ENCODE measurements at regions of chr1 and their contacts with region 1.

Region 1: DNA sequence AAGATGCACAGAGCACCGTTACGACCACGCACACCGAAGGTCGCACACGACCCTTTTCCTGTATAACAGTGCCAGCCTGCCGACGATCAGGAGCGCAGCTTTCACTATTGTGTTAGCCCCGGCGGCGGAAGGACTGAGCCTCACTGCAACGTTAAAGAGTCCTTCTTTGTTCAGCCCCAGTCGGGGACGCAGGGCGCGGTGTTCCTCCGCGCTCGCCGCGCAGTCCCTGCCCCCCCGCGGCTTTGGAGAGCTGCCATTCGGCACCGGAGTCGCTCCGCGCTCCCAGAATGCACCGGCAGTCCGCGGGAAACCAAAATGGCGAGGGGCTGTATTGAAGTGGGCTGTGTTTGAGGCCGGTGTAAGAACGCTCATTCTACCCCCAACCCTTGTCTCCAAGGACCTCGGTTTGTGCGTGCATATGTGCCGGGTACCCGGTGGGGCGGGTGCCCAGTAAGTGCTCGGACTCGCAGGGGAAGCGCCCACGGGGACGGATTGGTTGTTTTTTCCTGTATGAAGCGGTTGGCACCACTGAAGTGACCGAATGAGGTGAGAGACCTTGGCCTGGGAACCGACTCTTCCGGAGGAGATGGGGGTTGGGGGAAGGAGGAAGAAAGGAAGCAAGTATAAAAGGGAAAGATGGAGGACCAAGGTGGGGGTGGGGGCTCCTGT is at the start of gene MTF2:
- DNase-seq: peak; percentile 93
- H3K4me3 Mint-ChIP-seq: peak within 1 kb of the TSS; percentile 99
- H3K27ac Mint-ChIP-seq: peak within 1 kb of the TSS; percentile 95
- H3K4me1 Mint-ChIP-seq: peaks cover 12% of the 10 kb centered on the region
- H3K27me3 Mint-ChIP-seq: no peaks in the 10 kb centered on the region
- CTCF ChIP-seq: no peak
- total RNA-seq, gene MTF2: 17.0 and 20.0 TPM in 2 replicates

Region 2: GRCh38 chr1:92538048-92538412 is 541.1 kb before region 1 on chr1:
- CTCF ChIA-PET with region 1: no interaction called
- POLR2A ChIA-PET with region 1: no interaction called
- intact Hi-C with region 1: no loop called
- DNase-seq: no peak
- H3K4me3 Mint-ChIP-seq: no peak overlapping the region
- H3K27ac Mint-ChIP-seq: no peak overlapping the region
- H3K4me1 Mint-ChIP-seq: no peaks in the 10 kb centered on the region
- H3K27me3 Mint-ChIP-seq: no peaks in the 10 kb centered on the region
- CTCF ChIP-seq: no peak

Region 3: GRCh38 chr1:93061895-93062792 is 17.0 kb before region 1 on chr1:
- CTCF ChIA-PET with region 1: interaction called, 6 read pairs
- POLR2A ChIA-PET with region 1: interaction called, 21 read pairs
- intact Hi-C with region 1: no loop called
- DNase-seq: peak; percentile 62
- H3K4me3 Mint-ChIP-seq: no peak overlapping the region
- H3K27ac Mint-ChIP-seq: no peak overlapping the region
- H3K4me1 Mint-ChIP-seq: no peaks in the 10 kb centered on the region
- H3K27me3 Mint-ChIP-seq: peaks cover 65% of the 10 kb centered on the region
- CTCF ChIP-seq: peak; percentile 29

Region 4: DNA sequence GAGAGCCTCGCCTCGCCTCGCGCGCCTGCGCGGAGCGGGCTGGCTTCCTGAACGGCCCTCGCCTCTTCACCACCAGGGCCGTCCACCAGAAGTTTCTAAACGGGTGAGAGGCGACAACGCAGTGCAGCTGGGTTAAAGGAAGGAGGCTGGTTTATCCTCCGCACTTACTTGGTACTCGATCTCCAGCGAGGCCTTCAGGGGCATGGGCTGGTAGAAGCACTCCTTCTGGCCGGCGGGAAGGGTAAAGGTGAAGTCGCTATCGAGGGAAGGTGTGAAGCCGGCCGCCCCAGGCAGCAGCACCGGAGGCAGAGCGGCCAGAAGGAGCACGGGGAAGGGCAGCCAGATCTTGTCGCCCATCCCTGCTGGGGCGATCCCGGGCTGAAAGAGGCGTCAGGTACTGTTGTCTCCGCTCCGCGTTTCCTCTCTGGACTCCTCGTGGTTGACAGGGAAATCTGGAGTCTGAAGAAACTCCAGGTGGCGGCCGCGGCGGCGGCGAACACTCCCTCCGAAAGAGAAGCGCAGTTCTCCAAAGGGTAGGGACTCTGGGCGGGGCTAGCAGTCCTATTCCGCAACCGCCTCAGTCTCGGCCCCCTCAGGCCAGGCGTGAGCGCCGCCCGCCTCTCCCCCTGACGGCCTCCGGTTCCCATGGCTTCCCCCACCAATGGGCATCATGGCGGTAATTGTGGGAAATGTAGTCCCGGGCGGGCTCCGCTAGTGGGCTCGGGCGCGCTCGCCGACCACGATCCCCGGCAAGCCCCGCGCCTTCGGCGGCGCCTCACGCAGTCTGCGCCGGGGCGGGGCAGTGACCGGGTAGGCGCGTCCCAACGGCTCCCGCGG is 101.0 kb after region 1 on chr1 and contains the start of gene TMED5:
- CTCF ChIA-PET with region 1: no interaction called
- POLR2A ChIA-PET with region 1: interaction called, 27 read pairs
- intact Hi-C with region 1: loop called (anchors 1 kb)
- DNase-seq: peak; percentile 99
- H3K4me3 Mint-ChIP-seq: peak within 1 kb of the TSS; percentile 93
- H3K27ac Mint-ChIP-seq: peak within 1 kb of the TSS; percentile 100
- H3K4me1 Mint-ChIP-seq: peaks cover 34% of the 10 kb centered on the region
- H3K27me3 Mint-ChIP-seq: no peaks in the 10 kb centered on the region
- CTCF ChIP-seq: peak; percentile 8
- total RNA-seq, gene TMED5: 80.5 and 86.2 TPM in 2 replicates

Region 5: GRCh38 chr1:93328809-93329760 is 250.0 kb after region 1 on chr1:
- CTCF ChIA-PET with region 1: interaction called, 5 read pairs
- POLR2A ChIA-PET with region 1: interaction called, 13 read pairs
- intact Hi-C with region 1: no loop called
- DNase-seq: no peak
- H3K4me3 Mint-ChIP-seq: no peak overlapping the region
- H3K27ac Mint-ChIP-seq: no peak overlapping the region
- H3K4me1 Mint-ChIP-seq: peaks cover 15% of the 10 kb centered on the region
- H3K27me3 Mint-ChIP-seq: no peaks in the 10 kb centered on the region
- CTCF ChIP-seq: no peak

Region 6: DNA sequence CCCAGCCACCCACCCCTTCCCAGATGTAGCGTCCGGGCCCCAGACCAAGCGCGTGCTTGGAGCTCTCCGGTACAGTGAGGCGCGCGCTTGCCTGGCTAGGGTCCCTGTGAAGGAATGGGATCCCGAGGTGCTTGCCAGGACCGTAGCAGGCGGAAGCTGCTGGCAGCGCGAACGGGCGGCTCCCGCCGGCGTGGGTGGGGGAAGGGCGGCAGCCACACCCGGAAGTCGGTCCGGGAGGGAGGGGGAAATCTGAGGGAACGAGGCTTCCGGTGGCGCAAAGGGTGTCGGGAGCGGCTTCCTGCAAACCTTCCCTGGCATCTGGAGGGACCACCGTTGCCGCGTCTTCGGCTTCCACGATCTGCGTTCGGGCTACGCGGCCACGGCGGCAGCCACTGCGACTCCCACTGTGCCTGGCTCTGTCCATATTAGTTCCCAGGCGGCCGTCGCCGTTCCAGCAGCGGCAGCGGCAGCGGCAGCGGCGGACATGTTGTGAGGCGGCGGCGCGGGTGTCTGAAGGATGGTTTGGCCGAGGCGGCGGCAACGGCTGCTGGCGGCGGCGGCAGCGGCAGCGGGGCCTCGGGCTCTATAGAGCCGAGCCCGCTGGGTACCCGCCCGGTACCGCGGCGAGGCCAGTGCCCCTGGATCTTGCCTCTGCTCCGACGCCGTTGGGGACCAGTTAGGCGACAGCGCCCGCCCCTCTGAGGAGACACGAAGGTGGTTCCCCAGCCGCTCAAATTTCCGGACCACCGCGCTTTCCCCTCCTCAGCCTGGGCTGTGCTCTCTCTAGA is 266.7 kb after region 1 on chr1 and contains the start of gene DR1:
- CTCF ChIA-PET with region 1: interaction called, 4 read pairs
- POLR2A ChIA-PET with region 1: interaction called, 12 read pairs
- intact Hi-C with region 1: loop called (anchors 5 kb)
- DNase-seq: peak; percentile 92
- H3K4me3 Mint-ChIP-seq: peak within 1 kb of the TSS; percentile 98
- H3K27ac Mint-ChIP-seq: peak within 1 kb of the TSS; percentile 98
- H3K4me1 Mint-ChIP-seq: peaks cover 5% of the 10 kb centered on the region
- H3K27me3 Mint-ChIP-seq: no peaks in the 10 kb centered on the region
- CTCF ChIP-seq: no peak
- total RNA-seq, gene DR1: 103 and 104 TPM in 2 replicates

Measured in MCF 10A (cell line).